ENCODE measurements at regions of chr12 and their contacts with region 1.

Region 1: DNA sequence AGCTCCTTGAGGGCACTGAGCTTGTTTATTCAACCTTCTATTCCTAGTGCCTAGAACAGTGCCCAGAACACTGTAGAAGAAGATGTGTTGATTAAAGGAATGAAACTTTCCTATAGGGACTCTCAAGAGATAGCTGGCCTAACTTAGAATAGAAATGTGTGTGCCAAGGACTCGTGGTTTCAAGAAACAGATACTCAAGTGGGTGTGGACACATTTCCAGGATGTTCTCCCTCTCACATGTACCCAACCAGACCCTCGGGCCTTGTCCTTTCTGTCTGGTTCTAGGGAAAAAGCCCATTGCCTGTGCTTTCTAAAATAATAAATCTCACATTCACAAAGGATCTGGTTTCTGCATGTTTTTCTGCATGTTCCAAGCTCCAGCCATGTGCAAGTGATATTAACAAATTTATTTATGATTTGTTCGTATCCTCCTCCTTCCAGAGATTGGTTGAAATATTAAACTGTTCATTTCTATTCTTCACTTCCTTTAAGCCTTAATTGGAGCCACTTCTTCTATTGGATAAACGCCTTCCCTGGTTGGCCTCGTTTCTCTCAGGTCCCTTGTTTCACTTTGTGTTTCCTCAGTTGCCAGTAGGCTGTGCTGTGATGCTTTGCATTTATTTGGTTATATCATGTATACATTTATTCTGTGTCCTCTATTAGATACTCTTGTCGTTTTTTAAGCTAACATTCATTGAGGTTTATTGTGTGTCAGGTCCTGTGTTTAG is 89.8 kb downstream of the CRADD start:
- DNase-seq: peak in 2 of 10 donors; percentile 46 to 71
- H3K4me3 ChIP-seq: no peak overlapping the region
- H3K27ac ChIP-seq: peak overlapping the region in 9 of 59 donors; percentile 14 to 48 (median 29)
- H3K27me3 ChIP-seq: no peaks in the 10 kb centered on the region
- CTCF ChIP-seq: peak; percentile 22 to 82 (median 63)

Region 2: DNA sequence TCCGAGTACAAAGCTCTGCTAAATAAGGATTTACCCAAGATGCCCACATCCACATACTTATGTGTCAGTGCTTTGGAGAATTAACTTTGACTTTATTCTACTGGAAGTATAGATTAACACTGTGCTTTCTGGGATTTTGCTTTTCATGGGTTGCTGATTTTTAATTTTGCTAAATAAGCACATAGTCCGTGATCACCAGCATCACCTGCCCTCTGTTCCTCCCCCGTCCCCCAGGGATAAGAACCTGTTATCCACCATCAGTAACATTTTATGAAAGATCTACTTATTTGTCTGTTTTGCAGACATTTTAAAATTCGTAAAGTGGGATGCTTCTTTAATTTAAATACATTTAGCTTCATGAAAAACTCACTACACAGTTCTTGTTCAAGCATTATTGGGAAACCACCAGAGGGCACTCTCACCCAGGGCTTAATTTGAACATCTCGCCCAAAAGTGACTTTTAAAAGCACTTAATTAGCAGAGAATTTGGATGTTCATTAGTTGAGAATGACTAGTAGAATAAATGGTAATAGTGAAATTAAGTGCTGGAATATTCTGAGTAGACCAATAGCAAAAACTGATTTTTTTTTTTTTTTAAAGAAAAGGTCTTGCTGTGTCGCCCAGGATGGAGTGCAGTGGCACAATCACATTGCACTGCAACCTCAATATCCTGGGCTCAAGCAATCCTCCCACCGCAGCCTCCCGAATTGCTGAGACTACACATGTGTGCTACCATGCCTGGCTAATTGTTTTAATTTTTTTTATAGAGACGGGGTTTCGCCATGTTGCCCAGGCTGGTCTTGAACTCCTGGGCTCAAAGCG is 263.9 kb before region 1 on chr12:
- intact Hi-C with region 1: loop called in 1 of 2 experiments (anchors 10 kb)
- DNase-seq: peak in 4 of 10 donors; percentile 26 to 48 (median 34)
- H3K4me3 ChIP-seq: no peak overlapping the region
- H3K27ac ChIP-seq: no peak overlapping the region
- H3K27me3 ChIP-seq: no peaks in the 10 kb centered on the region
- CTCF ChIP-seq: peak; percentile 68 to 91 (median 83)

Region 3: GRCh38 chr12:93785262-93786010 is 18.5 kb after region 1 on chr12:
- intact Hi-C with region 1: no loop called
- DNase-seq: no peak
- H3K4me3 ChIP-seq: peak overlapping the region in 3 of 59 donors; percentile 8 to 23 (median 22)
- H3K27ac ChIP-seq: peak overlapping the region in 55 of 59 donors; percentile 1 to 86 (median 68)
- H3K27me3 ChIP-seq: no peaks in the 10 kb centered on the region
- CTCF ChIP-seq: no peak

Measured in dorsolateral prefrontal cortex (tissue), 120 donors.